ENCODE measurements at regions of chr12 and their contacts with region 1.

Region 1: DNA sequence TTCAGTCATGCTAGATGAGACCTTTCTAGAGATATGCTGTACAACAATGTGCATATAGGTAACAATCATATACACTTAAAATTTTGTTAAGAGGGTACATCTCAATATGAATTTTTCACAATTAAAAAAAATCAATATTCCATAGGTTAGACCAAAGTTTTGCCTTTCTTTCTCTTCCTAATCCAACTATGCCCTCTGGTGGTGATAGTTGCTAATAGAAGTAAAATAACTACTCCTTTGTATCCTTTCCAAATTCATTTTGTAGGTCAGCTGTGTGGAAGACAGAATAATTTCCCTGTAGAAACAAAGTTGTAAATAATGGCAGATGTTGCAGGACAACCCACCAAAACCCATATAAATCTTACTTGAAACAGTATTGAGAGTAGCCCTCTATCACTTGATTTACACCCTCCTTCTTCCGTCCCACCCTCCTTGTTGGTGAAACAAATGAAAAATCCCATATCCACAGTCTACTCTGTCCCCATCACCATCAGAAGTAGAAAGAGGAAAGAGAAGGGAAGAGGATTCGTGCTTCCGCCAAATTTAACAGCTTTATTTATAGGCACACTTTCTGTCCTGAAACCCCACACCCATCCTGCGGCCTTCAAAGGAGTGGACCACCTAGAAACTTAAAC is 34.2 kb upstream of the KICS2 start:
- DNase-seq: peak; percentile 32
- H3K4me3 ChIP-seq: no peak overlapping the region
- H3K27ac ChIP-seq: no peak overlapping the region
- H3K4me1 ChIP-seq: no peaks in the 10 kb centered on the region
- H3K27me3 ChIP-seq: no peaks in the 10 kb centered on the region
- CTCF ChIP-seq: peak; percentile 47 to 65

Region 2: DNA sequence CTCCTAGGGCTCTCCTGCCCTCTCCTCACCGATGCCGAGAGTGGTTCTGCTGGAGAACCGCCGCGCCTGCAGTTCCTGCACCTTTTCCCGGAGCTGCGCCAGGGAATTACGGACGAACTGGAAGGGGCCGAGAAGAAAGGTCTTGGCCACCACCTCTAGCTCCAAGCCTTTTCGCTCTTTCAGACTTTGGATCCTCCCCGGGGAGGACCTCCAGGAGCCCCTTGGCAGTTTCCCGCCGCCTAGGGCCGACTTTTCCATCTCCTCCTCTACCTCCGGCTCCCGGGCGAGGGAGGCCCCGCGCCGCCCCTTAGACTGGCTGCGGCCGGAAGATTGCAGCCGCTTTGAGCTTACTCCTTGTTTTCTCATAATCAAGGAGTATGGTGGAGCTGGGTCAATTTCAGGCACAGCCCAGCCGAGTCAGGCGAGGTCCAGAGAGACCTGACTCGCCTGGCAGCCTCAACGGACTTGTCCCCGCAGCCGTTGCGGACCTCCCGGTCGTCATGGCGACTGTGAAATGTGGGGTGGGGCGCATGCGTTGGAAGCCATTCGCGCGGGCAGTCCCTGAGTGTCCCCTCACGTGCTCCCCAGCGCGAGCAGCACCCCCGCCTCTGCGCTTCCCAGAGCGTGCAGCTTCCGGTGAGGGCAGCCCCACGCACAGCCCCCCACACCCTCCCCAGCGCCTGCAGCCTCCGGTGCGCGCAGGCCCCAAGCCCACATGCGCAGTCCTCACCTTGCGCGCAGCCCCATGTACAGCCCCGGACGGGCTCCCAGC is 588.1 kb before region 1 on chr12 and contains the start of gene DPY19L2:
- CTCF ChIA-PET with region 1: no interaction called
- dilution Hi-C with region 1: no loop called
- in situ Hi-C with region 1: no loop called
- intact Hi-C with region 1: loop called (anchors 10 kb)
- DNase-seq: peak; percentile 33
- H3K4me3 ChIP-seq: peak within 1 kb of the TSS; percentile 41 to 51 (median 43)
- H3K27ac ChIP-seq: no peak within 1 kb of the TSS
- H3K4me1 ChIP-seq: peaks cover 10% of the 10 kb centered on the region
- H3K27me3 ChIP-seq: peaks cover 12% of the 10 kb centered on the region
- CTCF ChIP-seq: no peak
- total RNA-seq, gene DPY19L2: 0.92 to 1.3 TPM

Region 3: GRCh38 chr12:63826006-63826585 is 430.2 kb before region 1 on chr12:
- CTCF ChIA-PET with region 1: no interaction called
- dilution Hi-C with region 1: loop called (anchors 5 kb)
- in situ Hi-C with region 1: no loop called
- intact Hi-C with region 1: loop called (anchors 1 kb)
- DNase-seq: peak; percentile 52
- H3K4me3 ChIP-seq: no peak overlapping the region
- H3K27ac ChIP-seq: no peak overlapping the region
- H3K4me1 ChIP-seq: peaks cover 15% of the 10 kb centered on the region
- H3K27me3 ChIP-seq: no peaks in the 10 kb centered on the region
- CTCF ChIP-seq: peak; percentile 81 to 88

Region 4: GRCh38 chr12:63836936-63837335 is 419.3 kb before region 1 on chr12:
- CTCF ChIA-PET with region 1: no interaction called
- dilution Hi-C with region 1: loop called (anchors 5 kb)
- in situ Hi-C with region 1: loop called in 1 of 2 experiments (anchors 5 kb)
- intact Hi-C with region 1: loop called (anchors 1 kb)
- DNase-seq: no peak
- H3K4me3 ChIP-seq: no peak overlapping the region
- H3K27ac ChIP-seq: no peak overlapping the region
- H3K4me1 ChIP-seq: no peaks in the 10 kb centered on the region
- H3K27me3 ChIP-seq: no peaks in the 10 kb centered on the region
- CTCF ChIP-seq: no peak

Region 5: DNA sequence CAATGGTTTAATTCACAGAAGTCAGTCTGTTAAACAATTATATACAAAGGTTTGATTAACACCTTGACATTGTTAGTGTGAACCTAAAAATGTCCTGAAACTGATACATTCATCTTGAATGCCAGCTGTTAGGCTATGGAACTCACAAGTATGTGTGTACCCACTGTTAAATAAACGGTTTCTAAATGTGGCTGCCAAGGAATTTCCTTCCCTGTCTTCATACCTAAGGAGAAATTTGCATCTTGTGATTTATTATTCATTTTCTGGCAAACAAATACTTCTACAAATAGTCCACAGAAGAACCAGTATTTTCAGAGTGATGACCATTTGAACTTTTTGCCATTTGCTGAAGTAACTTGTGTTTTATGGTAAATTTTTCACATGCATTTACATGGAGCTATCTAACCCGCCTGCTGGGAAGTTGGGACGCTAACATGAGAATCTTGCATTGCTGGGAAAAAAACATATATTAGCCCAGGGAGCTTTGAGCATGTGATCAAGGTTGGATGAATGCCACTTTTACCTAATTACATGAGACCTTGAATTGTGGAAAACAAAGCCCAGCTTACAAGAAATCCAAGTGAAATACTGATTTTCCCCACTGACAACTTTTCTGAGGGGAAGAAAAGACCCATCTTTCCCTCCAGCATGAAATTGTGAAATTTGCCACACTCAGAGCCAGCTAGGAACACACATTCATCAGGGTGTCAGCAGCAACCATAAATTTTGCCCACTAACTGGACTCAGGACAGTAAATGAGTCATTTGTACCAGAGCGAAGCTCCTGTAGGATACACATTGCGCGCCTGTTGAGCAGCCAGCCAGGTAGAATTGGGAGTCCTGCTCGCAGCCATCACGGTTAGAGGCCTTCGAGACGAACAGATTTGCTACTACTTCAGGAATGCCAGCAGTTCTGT is 152.2 kb before region 1 on chr12:
- CTCF ChIA-PET with region 1: no interaction called
- dilution Hi-C with region 1: no loop called
- in situ Hi-C with region 1: no loop called
- intact Hi-C with region 1: loop called (anchors 10 kb)
- DNase-seq: peak; percentile 93
- H3K4me3 ChIP-seq: no peak overlapping the region
- H3K27ac ChIP-seq: peak overlapping the region; percentile 73
- H3K4me1 ChIP-seq: peaks cover 56% of the 10 kb centered on the region
- H3K27me3 ChIP-seq: no peaks in the 10 kb centered on the region
- CTCF ChIP-seq: no peak

Region 6: DNA sequence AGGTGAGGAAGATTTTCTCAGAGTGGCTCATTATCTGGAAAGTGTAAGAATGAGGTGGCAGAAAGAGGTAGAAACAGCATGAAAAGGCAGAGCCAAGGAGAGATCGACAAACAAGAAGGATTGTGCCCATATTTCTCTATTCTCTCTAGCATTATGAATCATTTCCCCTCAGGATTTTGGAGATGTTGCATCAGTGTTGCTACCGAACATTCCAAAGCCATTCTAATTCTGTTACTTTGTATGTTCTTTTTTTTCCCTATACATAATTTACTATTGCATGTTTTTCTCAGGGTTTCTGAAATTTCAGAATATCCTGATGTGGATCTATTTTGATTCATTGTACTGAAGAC is 95.6 kb before region 1 on chr12:
- CTCF ChIA-PET with region 1: no interaction called
- dilution Hi-C with region 1: no loop called
- in situ Hi-C with region 1: no loop called
- intact Hi-C with region 1: no loop called
- DNase-seq: peak; percentile 42
- H3K4me3 ChIP-seq: no peak overlapping the region
- H3K27ac ChIP-seq: peak overlapping the region; percentile 64
- H3K4me1 ChIP-seq: peaks cover 15% of the 10 kb centered on the region
- H3K27me3 ChIP-seq: no peaks in the 10 kb centered on the region
- CTCF ChIP-seq: no peak